ENCODE measurements at regions of chr11 and their contacts with region 1.

Region 1: DNA sequence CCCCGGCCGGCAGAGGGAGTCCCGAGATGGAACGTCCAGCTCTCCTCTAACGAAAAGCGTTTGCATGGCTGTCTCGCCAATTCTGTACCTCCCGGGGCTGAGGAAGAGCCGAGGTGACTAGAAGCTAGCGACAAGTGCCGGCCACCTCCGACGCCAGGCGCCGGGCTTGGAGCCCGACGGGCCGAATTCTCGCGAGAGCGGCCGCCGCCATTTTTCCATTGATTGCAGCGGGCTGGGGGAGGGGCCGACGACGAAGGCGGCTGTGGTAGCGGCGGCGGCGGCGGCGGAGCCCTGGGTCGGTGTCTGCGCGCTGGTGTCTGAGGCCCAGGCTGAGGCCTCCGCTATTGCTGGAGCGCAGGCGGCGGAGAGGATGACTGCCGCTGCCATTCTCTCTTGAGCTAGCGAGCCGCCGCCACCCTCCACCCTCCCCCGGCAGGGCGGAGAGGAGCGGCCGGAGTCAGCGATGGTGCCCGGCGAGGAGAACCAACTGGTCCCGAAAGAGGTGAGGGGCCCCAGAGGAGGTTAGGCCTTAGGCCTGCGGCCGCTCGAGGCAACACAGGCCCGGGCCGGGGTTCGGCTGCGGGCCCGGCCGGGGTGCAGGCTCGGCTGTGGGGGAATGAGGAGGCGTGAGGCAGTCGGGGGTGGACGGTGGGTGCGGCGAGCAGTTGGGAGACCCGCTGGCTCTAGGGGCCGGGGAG is at the start of gene USP47:
- DNase-seq: peak; percentile 98
- ATAC-seq: peak; percentile 77
- H3K4me3 Mint-ChIP-seq: no peak within 1 kb of the TSS
- H3K27ac Mint-ChIP-seq: no peak within 1 kb of the TSS
- H3K4me1 Mint-ChIP-seq: peaks cover 21% of the 10 kb centered on the region
- H3K27me3 Mint-ChIP-seq: no peaks in the 10 kb centered on the region
- total RNA-seq, gene USP47: 43.7 to 46.0 TPM

Region 2: GRCh38 chr11:11856638-11857037 is 14.8 kb after region 1 on chr11:
- POLR2A ChIA-PET with region 1: interaction called, 23 read pairs
- DNase-seq: no peak
- ATAC-seq: peak; percentile 85
- H3K4me3 Mint-ChIP-seq: no peak overlapping the region
- H3K27ac Mint-ChIP-seq: peak overlapping the region; percentile 67
- H3K4me1 Mint-ChIP-seq: peaks cover 33% of the 10 kb centered on the region
- H3K27me3 Mint-ChIP-seq: no peaks in the 10 kb centered on the region